Right ventricle myocardium superior (tissue), 1 donor: ENCODE measurements at regions of chr1 and their contacts with region 1.

Region 1: GRCh38 chr1:201637680-201638079 is 98.8 kb downstream of the NAV1 start:
- DNase-seq: no peak
- ATAC-seq: peak; percentile 18

Region 2: DNA sequence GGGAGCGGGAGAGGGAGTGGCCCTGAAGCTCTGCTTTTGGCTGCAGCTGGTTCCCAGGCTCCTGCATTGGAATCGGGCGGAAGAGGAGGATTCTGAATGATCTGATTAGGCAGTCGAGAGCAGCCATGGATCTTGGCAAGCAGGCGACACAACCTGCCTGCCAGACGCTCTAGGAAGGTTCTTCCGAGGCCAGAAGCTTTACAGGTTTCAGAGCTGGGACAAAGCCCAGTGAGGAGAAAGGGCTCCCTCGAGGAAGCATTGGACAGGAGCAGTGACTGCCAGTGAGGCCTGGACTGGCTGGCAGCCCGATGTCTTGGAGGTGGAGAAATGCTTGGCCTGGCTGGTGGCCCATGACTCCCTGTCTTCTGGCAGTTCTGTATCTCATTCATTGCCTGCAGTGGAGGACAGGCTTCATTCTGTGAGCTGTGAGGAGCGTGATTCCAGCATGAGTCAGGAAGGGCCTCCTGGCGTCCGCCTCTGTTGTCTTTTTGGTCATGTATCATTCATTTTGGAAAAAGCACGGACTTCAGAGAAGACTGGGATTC is 58.6 kb after region 1 on chr1:
- intact Hi-C with region 1: loop called (anchors 10 kb)
- DNase-seq: peak; percentile 93
- ATAC-seq: peak; percentile 90

Region 3: DNA sequence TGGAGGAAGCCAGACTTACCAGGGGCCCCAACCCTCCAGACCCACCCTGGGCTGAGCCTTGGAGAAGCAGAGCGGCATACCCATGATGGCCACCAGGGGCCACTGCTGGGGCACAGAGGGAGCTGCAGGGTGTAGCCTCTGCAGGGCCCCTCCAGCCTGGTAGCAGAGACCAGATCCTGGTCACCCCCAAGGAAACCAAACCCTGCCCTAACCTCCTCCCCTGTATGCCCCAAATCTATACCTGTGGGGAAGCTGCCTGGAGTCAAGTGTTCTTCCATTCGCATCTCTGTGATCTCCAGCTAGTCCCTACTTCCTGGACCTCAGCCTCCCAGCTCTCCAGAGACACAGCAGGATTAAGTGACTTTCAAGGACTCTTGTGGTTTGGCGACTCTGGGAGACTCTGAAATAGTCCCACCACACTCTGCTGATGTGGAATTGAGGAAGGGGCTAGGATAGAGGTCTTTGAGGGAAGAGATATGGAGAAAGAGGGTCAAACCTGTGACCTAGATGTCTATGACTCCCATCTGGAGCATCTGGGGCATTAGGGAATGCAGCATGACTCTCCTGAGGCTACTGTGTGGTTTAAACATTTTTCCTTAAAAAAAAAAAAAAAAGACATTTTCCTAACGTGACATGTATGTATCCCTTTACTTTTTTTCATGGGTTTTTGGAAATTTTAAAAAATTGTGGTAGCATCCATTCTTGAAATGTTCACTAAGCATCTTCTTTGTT is 72.0 kb after region 1 on chr1:
- intact Hi-C with region 1: no loop called
- DNase-seq: peak; percentile 87
- ATAC-seq: peak; percentile 68